ENCODE measurements at regions of chr3 and their contacts with region 1.

Region 1: DNA sequence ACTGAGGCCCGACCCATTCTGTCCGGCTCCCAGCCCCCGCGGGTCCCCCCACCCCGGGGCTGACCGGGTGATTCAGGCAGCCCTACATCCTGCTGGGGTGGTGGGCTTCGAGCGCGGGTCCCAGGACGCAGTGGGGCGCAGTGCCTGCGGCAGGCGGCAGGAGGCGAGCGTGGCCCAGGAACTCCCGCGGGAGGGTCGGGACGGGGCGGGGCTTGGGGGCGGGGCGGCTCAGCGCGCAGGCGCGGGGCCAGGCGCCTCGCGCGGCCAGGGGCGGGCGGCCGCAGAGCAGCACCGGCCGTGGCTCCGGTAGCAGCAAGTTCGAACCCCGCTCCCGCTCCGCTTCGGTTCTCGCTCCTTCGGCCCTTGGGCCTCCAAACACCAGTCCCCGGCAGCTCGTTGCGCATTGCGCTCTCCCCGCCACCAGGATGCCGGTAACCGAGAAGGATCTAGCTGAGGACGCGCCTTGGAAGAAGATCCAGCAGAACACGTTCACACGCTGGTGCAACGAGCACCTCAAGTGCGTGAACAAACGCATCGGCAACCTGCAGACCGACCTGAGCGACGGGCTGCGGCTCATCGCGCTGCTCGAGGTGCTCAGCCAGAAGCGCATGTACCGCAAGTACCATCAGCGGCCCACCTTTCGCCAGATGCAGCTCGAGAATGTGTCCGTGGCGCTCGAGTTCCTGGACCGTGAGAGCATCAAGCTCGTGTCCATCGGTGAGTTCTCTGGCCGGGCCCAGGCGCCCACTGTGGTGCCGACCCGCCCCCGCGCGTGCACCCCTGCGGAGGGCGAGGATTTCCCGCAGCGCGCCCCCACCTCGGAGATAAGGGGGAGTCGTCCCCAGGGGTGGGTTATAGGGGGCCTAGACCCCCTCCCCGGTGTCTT is at the start of gene FLNB:
- DNase-seq: peak; percentile 86
- ATAC-seq: peak; percentile 92
- H3K4me3 ChIP-seq: peak within 1 kb of the TSS; percentile 88 to 97 (median 95)
- H3K4me3 Mint-ChIP-seq: peak within 1 kb of the TSS; percentile 94
- H3K27ac ChIP-seq: peak within 1 kb of the TSS; percentile 50 to 60
- H3K27ac Mint-ChIP-seq: peak within 1 kb of the TSS; percentile 85
- H3K4me1 ChIP-seq: peaks cover 14% of the 10 kb centered on the region in 2 donors
- H3K4me1 Mint-ChIP-seq: peaks cover 22% of the 10 kb centered on the region
- H3K27me3 ChIP-seq: no peaks in the 10 kb centered on the region
- H3K27me3 Mint-ChIP-seq: no peaks in the 10 kb centered on the region
- CTCF ChIP-seq: peak; percentile 72
- total RNA-seq, gene FLNB: 28.2 and 28.3 TPM in 2 replicates

Region 2: DNA sequence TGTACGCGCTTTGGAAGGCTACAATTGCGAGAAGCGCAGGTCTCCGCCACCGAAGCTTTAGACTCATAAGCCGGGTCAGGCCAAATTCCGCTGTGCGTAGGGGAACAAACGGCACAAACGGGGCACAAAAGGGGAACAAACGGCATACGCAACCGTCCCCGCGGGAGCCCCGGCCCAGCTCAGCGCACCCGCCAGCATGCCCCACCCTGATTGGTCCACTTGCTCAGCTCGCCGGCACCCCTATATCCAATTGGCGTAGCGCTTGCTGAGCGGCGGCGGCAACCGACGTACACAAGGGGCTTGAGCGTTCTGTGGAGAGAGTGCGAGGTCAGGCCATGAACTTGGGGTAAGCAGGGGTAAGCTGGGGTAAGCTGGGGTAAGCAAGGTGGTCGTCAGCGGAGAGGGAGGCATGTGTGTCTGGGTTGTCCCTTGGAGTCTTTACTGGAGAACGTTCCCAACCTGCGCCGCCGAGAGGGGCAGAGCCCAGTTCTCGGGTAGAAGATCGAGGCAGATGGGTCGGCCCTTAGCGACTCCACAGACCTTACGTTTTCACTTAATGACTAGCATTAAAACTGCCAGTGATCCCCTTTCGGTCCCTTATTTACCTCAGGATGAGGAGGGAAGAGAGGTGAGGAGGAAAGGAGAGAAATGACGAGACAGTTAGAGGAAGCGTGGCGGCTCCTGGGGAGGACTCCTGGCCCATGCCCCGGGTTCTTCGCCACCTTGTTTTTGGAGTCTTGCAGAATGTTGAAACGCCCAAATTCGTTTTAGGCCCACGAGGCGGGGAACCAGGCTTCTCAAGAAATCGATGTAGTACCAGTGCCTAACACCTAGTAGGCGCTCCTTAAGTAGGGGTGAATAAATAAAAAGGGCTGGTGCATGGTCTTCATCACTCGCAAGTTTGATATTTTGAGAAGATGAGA is 1451.2 kb before region 1 on chr3 and contains the start of gene CCDC66:
- CTCF ChIA-PET with region 1: no interaction called
- POLR2A ChIA-PET with region 1: no interaction called
- intact Hi-C with region 1: loop called (anchors 2 kb)
- DNase-seq: peak; percentile 94
- ATAC-seq: peak; percentile 98
- H3K4me3 ChIP-seq: peak within 1 kb of the TSS; percentile 83 to 97 (median 91)
- H3K4me3 Mint-ChIP-seq: peak within 1 kb of the TSS; percentile 99
- H3K27ac ChIP-seq: peak within 1 kb of the TSS; percentile 87 to 91
- H3K27ac Mint-ChIP-seq: peak within 1 kb of the TSS; percentile 97
- H3K4me1 ChIP-seq: peaks cover 7 to 8% of the 10 kb centered on the region in 2 donors
- H3K4me1 Mint-ChIP-seq: peaks cover 19% of the 10 kb centered on the region
- H3K27me3 ChIP-seq: no peaks in the 10 kb centered on the region
- H3K27me3 Mint-ChIP-seq: no peaks in the 10 kb centered on the region
- CTCF ChIP-seq: peak; percentile 81
- total RNA-seq, gene CCDC66: 51.7 and 53.7 TPM in 2 replicates

Region 3: DNA sequence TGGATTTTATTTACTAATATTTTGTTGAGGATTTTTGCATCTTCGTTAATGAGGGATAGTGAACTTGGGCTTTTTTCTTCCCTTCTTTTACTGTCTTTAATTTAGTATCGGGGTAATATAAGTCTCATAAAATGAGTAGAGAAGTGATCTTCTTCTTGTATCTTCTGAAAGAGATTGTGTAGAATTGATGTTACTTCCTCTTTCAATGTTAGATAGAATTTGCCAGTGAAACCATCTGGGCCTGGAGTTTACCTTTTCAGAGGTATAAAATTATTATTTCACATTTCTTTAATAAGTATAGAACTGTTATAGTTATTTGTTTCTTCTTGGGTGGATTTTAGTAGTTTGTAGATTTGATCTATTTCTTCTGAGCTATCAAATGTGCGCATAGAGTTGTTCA is 816.4 kb before region 1 on chr3:
- CTCF ChIA-PET with region 1: no interaction called
- POLR2A ChIA-PET with region 1: no interaction called
- intact Hi-C with region 1: no loop called
- DNase-seq: no peak
- ATAC-seq: no peak
- H3K4me3 ChIP-seq: no peak overlapping the region
- H3K4me3 Mint-ChIP-seq: no peak overlapping the region
- H3K27ac ChIP-seq: no peak overlapping the region
- H3K27ac Mint-ChIP-seq: no peak overlapping the region
- H3K4me1 ChIP-seq: no peaks in the 10 kb centered on the region
- H3K4me1 Mint-ChIP-seq: peaks cover 10% of the 10 kb centered on the region
- H3K27me3 ChIP-seq: no peaks in the 10 kb centered on the region
- H3K27me3 Mint-ChIP-seq: peaks cover 3% of the 10 kb centered on the region
- CTCF ChIP-seq: no peak

Region 4: GRCh38 chr3:57983734-57984518 is 24.5 kb before region 1 on chr3:
- CTCF ChIA-PET with region 1: interaction called, 3 read pairs
- POLR2A ChIA-PET with region 1: interaction called, 3 read pairs
- intact Hi-C with region 1: loop called (anchors 1 kb)
- DNase-seq: peak; percentile 77
- ATAC-seq: peak; percentile 98
- H3K4me3 ChIP-seq: no peak overlapping the region
- H3K4me3 Mint-ChIP-seq: no peak overlapping the region
- H3K27ac ChIP-seq: peak overlapping the region in 1 of 2 donors; percentile 3
- H3K27ac Mint-ChIP-seq: peak overlapping the region; percentile 37
- H3K4me1 ChIP-seq: peaks cover 27 to 31% of the 10 kb centered on the region in 2 donors
- H3K4me1 Mint-ChIP-seq: peaks cover 30% of the 10 kb centered on the region
- H3K27me3 ChIP-seq: peaks cover 0 to 8% (median 3%) of the 10 kb centered on the region in 4 experiments
- H3K27me3 Mint-ChIP-seq: peaks cover 3% of the 10 kb centered on the region
- CTCF ChIP-seq: no peak

Region 5: GRCh38 chr3:58116161-58116955 is 108.0 kb after region 1 on chr3:
- CTCF ChIA-PET with region 1: interaction called, 5 read pairs
- POLR2A ChIA-PET with region 1: no interaction called
- intact Hi-C with region 1: loop called (anchors 1 kb)
- DNase-seq: peak; percentile 95
- ATAC-seq: peak; percentile 93
- H3K4me3 ChIP-seq: peak overlapping the region in 1 of 5 experiments; percentile 1
- H3K4me3 Mint-ChIP-seq: peak overlapping the region; percentile 77
- H3K27ac ChIP-seq: peak overlapping the region; percentile 80 to 89
- H3K27ac Mint-ChIP-seq: peak overlapping the region; percentile 95
- H3K4me1 ChIP-seq: peaks cover 62 to 74% of the 10 kb centered on the region in 2 donors
- H3K4me1 Mint-ChIP-seq: peaks cover 73% of the 10 kb centered on the region
- H3K27me3 ChIP-seq: no peaks in the 10 kb centered on the region
- H3K27me3 Mint-ChIP-seq: no peaks in the 10 kb centered on the region
- CTCF ChIP-seq: no peak

Region 6: GRCh38 chr3:58177747-58178527 is 169.6 kb after region 1 on chr3:
- CTCF ChIA-PET with region 1: interaction called, 21 read pairs
- POLR2A ChIA-PET with region 1: no interaction called
- intact Hi-C with region 1: loop called (anchors 2 kb)
- DNase-seq: peak; percentile 90
- ATAC-seq: peak; percentile 96
- H3K4me3 ChIP-seq: peak overlapping the region in 4 of 5 experiments; percentile 38 to 66 (median 56)
- H3K4me3 Mint-ChIP-seq: peak overlapping the region; percentile 86
- H3K27ac ChIP-seq: no peak overlapping the region
- H3K27ac Mint-ChIP-seq: peak overlapping the region; percentile 50
- H3K4me1 ChIP-seq: peaks cover 19 to 24% of the 10 kb centered on the region in 2 donors
- H3K4me1 Mint-ChIP-seq: peaks cover 27% of the 10 kb centered on the region
- H3K27me3 ChIP-seq: peaks cover 0 to 8% (median 3%) of the 10 kb centered on the region in 4 experiments
- H3K27me3 Mint-ChIP-seq: no peaks in the 10 kb centered on the region
- CTCF ChIP-seq: peak; percentile 88

Region 7: GRCh38 chr3:58217209-58217811 is 208.9 kb after region 1 on chr3:
- CTCF ChIA-PET with region 1: interaction called, 4 read pairs
- POLR2A ChIA-PET with region 1: no interaction called
- intact Hi-C with region 1: loop called (anchors 1 kb)
- DNase-seq: peak; percentile 84
- ATAC-seq: peak; percentile 60
- H3K4me3 ChIP-seq: peak overlapping the region in 4 of 5 experiments; percentile 34 to 61 (median 48)
- H3K4me3 Mint-ChIP-seq: peak overlapping the region; percentile 79
- H3K27ac ChIP-seq: peak overlapping the region in 1 of 2 donors; percentile 52
- H3K27ac Mint-ChIP-seq: peak overlapping the region; percentile 69
- H3K4me1 ChIP-seq: peaks cover 52 to 58% of the 10 kb centered on the region in 2 donors
- H3K4me1 Mint-ChIP-seq: peaks cover 49% of the 10 kb centered on the region
- H3K27me3 ChIP-seq: no peaks in the 10 kb centered on the region
- H3K27me3 Mint-ChIP-seq: no peaks in the 10 kb centered on the region
- CTCF ChIP-seq: peak; percentile 97

Region 8: DNA sequence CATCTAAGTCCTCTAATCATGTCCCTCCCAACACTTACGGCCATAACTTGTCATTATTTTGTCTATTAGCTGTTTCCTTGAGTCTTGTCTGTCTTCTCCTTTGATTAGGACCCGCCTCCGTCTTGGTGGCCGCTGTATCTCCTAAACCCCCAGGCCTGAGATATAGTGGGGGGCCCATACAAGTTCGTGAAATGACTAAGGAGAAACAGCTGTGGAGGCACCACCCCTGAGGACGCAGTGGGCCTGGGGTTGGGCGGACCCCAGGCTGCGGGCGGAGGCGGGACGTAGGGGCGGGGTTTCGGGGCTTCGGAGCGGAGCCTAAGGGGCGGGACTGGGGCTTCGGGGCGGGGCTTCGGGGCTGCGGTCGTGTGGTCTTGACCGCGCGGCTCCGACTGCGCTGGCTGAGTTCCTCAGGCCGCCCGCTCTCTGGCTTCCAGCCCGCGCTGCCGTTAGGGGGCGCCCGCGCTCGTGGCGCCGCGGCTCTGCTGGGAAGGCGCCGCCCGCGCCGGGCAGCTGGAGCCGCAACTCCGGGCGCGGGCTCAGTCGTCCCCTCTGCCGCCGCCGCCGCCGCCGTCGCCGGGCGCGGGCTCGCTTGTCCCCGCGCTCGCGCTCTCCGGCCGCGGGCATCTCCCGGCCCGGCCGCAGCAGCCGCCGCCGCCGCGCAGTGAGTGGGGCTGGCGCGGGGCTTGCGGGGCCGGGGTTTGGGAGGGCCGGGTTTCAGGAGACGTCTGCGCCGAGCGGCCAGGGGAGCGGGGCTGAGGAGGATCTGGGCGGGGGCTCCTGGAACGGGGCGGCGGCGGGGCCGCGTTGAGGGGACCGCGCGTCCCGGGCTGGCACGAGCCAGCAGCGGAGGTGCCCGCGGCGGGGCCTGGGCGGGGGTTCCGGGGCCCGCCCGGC is 483.4 kb after region 1 on chr3 and contains the start of gene KCTD6:
- CTCF ChIA-PET with region 1: interaction called, 3 read pairs
- POLR2A ChIA-PET with region 1: no interaction called
- intact Hi-C with region 1: loop called (anchors 2 kb)
- DNase-seq: peak; percentile 96
- ATAC-seq: peak; percentile 91
- H3K4me3 ChIP-seq: peak within 1 kb of the TSS; percentile 50 to 82 (median 75)
- H3K4me3 Mint-ChIP-seq: peak within 1 kb of the TSS; percentile 93
- H3K27ac ChIP-seq: peak within 1 kb of the TSS; percentile 42 to 50
- H3K27ac Mint-ChIP-seq: peak within 1 kb of the TSS; percentile 87
- H3K4me1 ChIP-seq: peaks cover 21 to 29% of the 10 kb centered on the region in 2 donors
- H3K4me1 Mint-ChIP-seq: peaks cover 46% of the 10 kb centered on the region
- H3K27me3 ChIP-seq: no peaks in the 10 kb centered on the region
- H3K27me3 Mint-ChIP-seq: peaks cover 5% of the 10 kb centered on the region
- CTCF ChIP-seq: peak; percentile 59
- total RNA-seq, gene KCTD6: 14.6 and 16.8 TPM in 2 replicates